ENCODE measurements at regions of chr2 and their contacts with region 1.

Region 1: GRCh38 chr2:197239434-197239833 is 71.1 kb downstream of the ANKRD44 start:
- DNase-seq: no peak
- H3K4me3 Mint-ChIP-seq: peak overlapping the region; percentile 77
- H3K27ac Mint-ChIP-seq: peak overlapping the region; percentile 94
- H3K4me1 Mint-ChIP-seq: peaks cover 73% of the 10 kb centered on the region
- H3K27me3 Mint-ChIP-seq: no peaks in the 10 kb centered on the region

Region 2: GRCh38 chr2:197198890-197199289 is 40.5 kb before region 1 on chr2:
- intact Hi-C with region 1: loop called (anchors 1 kb)
- DNase-seq: peak; percentile 89
- H3K4me3 Mint-ChIP-seq: peak overlapping the region; percentile 86
- H3K27ac Mint-ChIP-seq: peak overlapping the region; percentile 95
- H3K4me1 Mint-ChIP-seq: peaks cover 80% of the 10 kb centered on the region
- H3K27me3 Mint-ChIP-seq: no peaks in the 10 kb centered on the region

Region 3: DNA sequence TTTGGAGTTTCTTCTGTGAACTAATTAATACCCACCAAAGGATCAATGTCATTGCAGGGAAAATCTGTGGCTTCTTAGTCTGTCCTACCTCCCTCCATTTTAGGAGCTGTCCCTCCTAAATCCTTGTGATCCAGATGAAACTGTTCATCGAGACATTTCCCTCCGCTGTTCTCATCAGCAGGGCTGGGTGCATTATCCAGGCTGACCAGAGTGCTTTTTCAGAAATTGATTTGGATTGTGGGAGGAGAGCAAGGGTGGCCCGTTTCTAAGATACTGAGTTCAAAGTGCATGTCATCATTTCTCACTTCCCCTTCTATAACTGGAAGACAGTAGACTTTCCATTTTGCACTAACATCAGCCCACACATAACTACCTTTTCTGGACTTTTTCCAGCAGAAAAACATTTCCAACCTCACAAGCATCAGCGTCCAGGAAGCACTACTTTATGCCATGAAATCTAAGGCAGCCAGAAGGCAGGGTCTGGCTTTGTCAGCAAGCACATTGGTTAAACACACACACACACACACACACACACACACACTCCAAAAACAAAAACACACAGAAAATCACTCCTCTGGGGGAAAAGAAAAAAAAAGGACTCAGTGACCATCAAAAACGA is 23.0 kb before region 1 on chr2:
- intact Hi-C with region 1: loop called (anchors 1 kb)
- DNase-seq: no peak
- H3K4me3 Mint-ChIP-seq: peak overlapping the region; percentile 74
- H3K27ac Mint-ChIP-seq: peak overlapping the region; percentile 96
- H3K4me1 Mint-ChIP-seq: peaks cover 77% of the 10 kb centered on the region
- H3K27me3 Mint-ChIP-seq: no peaks in the 10 kb centered on the region

Region 4: DNA sequence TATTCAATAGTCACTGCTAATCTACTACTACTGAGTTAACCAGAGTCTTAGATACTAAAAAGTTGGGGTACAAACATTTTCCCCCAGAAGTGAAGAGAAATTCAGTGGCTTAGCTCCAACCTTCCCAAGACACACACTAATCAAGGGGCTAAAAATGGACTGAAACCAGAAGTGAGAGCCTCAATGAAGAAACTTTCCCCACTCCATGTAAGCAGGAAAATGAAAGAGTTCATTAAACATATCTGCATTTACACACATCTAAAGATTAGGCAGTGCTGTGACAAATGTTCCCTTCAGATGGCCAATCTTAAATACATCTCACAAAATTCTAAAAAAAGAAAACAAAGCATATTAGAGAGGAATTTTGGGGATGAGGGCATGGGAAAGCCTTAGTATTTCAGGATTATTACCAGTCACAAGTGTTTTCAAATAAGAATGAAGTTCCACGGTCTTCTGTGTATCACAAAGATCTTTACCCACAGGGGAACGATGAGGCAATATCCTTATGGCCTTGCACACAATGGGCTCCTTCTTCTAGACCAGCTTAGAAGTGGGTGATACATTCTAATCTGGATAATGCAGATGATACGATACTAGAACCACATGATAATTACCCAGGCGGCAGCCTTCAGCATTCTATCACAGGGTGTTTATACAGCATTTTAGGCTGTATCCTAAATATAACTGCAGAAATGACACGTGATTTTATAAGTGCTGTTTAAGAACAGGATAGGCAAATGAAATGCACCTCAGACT is 54.0 kb after region 1 on chr2:
- intact Hi-C with region 1: loop called (anchors 2 kb)
- DNase-seq: no peak
- H3K4me3 Mint-ChIP-seq: peak overlapping the region; percentile 79
- H3K27ac Mint-ChIP-seq: peak overlapping the region; percentile 94
- H3K4me1 Mint-ChIP-seq: peaks cover 80% of the 10 kb centered on the region
- H3K27me3 Mint-ChIP-seq: no peaks in the 10 kb centered on the region

Measured in activated T-helper 2 cell treated with anti-CD3 and anti-CD28 coated beads, Interferon-gamma antibody, Interleukin-2, Interleukin-4, amounts not matched to agents 10 μg/mL and 5 μg/mL and 100 μg/mL, durations not matched to agents 14 hours and 24 hours and 36 hours (primary cell).